Naive thymus-derived CD4-positive, alpha-beta T cell (primary cell): ENCODE measurements at regions of chr19 and their contacts with region 1.

Region 1: GRCh38 chr19:6297202-6297601 is 17.4 kb upstream of the MLLT1 start:
- DNase-seq: no peak
- ATAC-seq: no peak
- H3K4me3 ChIP-seq: no peak overlapping the region
- H3K4me3 Mint-ChIP-seq: no peak overlapping the region
- H3K27ac ChIP-seq: no peak overlapping the region
- H3K27ac Mint-ChIP-seq: no peak overlapping the region
- H3K4me1 ChIP-seq: no peaks in the 10 kb centered on the region
- H3K4me1 Mint-ChIP-seq: peaks cover 0 to 4% (median 0%) of the 10 kb centered on the region in 7 donors
- H3K27me3 ChIP-seq: no peaks in the 10 kb centered on the region
- H3K27me3 Mint-ChIP-seq: peaks cover 0 to 3% (median 0%) of the 10 kb centered on the region in 5 donors

Region 2: DNA sequence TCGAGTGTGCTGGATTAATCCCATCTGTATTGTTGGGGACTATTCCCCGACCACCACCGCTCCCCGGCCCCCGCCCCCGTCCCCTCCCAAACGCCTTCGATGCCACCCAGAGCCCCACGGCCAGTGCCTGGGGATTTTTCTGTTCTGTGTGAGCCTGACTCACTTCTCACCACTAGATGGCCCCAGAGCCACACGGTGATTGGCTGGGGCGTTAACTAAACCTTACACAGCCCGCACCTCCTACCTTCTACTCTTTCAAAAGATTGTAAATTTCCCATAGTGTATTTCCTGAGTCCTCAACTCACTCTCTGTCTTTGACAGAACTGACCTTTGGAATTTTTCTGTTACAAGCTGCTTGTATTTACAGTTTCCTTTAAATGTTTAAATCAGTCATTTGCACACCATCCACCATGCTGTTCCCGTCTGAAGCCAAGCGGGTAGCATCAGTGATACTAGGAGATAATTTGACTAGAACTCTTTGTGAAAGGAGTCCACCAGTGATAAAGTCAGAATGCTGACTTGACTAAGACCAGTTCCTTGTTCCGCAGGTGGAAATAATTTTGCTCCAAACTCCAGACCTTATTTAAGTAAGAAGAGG is 248.3 kb before region 1 on chr19:
- CTCF ChIA-PET with region 1: no interaction called
- POLR2A ChIA-PET with region 1: no interaction called
- intact Hi-C with region 1: loop called in 1 of 2 experiments (anchors 1 kb)
- DNase-seq: peak; percentile 56 to 81 (median 74)
- ATAC-seq: peak; percentile 100
- H3K4me3 ChIP-seq: no peak overlapping the region
- H3K4me3 Mint-ChIP-seq: no peak overlapping the region
- H3K27ac ChIP-seq: no peak overlapping the region
- H3K27ac Mint-ChIP-seq: no peak overlapping the region
- H3K4me1 ChIP-seq: no peaks in the 10 kb centered on the region
- H3K4me1 Mint-ChIP-seq: peaks cover 0 to 5% (median 4%) of the 10 kb centered on the region in 7 donors
- H3K27me3 ChIP-seq: no peaks in the 10 kb centered on the region
- H3K27me3 Mint-ChIP-seq: peaks cover 0 to 11% (median 0%) of the 10 kb centered on the region in 5 donors

Region 3: GRCh38 chr19:6076675-6077463 is 220.3 kb before region 1 on chr19:
- CTCF ChIA-PET with region 1: no interaction called
- POLR2A ChIA-PET with region 1: no interaction called
- intact Hi-C with region 1: no loop called
- DNase-seq: no peak
- ATAC-seq: peak; percentile 58
- H3K4me3 ChIP-seq: no peak overlapping the region
- H3K4me3 Mint-ChIP-seq: no peak overlapping the region
- H3K27ac ChIP-seq: no peak overlapping the region
- H3K27ac Mint-ChIP-seq: no peak overlapping the region
- H3K4me1 ChIP-seq: no peaks in the 10 kb centered on the region
- H3K4me1 Mint-ChIP-seq: peaks cover 0 to 11% (median 0%) of the 10 kb centered on the region in 7 donors
- H3K27me3 ChIP-seq: no peaks in the 10 kb centered on the region
- H3K27me3 Mint-ChIP-seq: no peaks in the 10 kb centered on the region

Region 4: DNA sequence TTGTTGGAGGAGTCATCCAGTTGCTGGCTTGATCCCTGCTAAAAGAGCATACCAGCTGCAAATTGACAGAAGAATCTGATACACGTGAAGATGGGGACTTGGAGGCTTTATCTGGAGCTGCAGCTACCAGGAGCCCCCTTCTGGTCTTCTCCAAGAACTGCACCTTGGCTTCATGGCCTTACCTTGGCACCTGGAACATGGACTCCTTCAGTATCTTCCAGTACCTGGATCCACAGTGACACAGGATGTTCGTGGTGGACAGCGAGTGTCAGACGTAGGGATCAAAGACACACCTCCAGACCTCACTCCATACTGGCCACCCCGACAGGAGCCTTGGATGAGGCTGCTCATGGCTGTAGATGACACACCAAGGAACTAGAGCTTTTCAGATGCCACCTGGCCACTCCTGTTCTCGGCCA is 171.6 kb before region 1 on chr19:
- CTCF ChIA-PET with region 1: no interaction called
- POLR2A ChIA-PET with region 1: no interaction called
- intact Hi-C with region 1: loop called (anchors 1 kb)
- DNase-seq: peak; percentile 25 to 78 (median 70)
- ATAC-seq: peak; percentile 89
- H3K4me3 ChIP-seq: no peak overlapping the region
- H3K4me3 Mint-ChIP-seq: no peak overlapping the region
- H3K27ac ChIP-seq: no peak overlapping the region
- H3K27ac Mint-ChIP-seq: peak overlapping the region in 1 of 9 donors; percentile 28
- H3K4me1 ChIP-seq: no peaks in the 10 kb centered on the region
- H3K4me1 Mint-ChIP-seq: peaks cover 0 to 7% (median 0%) of the 10 kb centered on the region in 7 donors
- H3K27me3 ChIP-seq: no peaks in the 10 kb centered on the region
- H3K27me3 Mint-ChIP-seq: no peaks in the 10 kb centered on the region

Region 5: GRCh38 chr19:6161271-6161850 is 135.8 kb before region 1 on chr19:
- CTCF ChIA-PET with region 1: no interaction called
- POLR2A ChIA-PET with region 1: no interaction called
- intact Hi-C with region 1: loop called in 1 of 2 experiments (anchors 1 kb)
- DNase-seq: peak; percentile 10 to 94 (median 78)
- ATAC-seq: peak; percentile 89
- H3K4me3 ChIP-seq: peak overlapping the region; percentile 13
- H3K4me3 Mint-ChIP-seq: peak overlapping the region in 9 of 10 donors; percentile 19 to 75 (median 38)
- H3K27ac ChIP-seq: no peak overlapping the region
- H3K27ac Mint-ChIP-seq: peak overlapping the region in 8 of 9 donors; percentile 33 to 88 (median 74)
- H3K4me1 ChIP-seq: peaks cover 4 to 8% of the 10 kb centered on the region in 2 donors
- H3K4me1 Mint-ChIP-seq: peaks cover 0 to 26% (median 11%) of the 10 kb centered on the region in 7 donors
- H3K27me3 ChIP-seq: no peaks in the 10 kb centered on the region
- H3K27me3 Mint-ChIP-seq: peaks cover 0 to 2% (median 0%) of the 10 kb centered on the region in 5 donors

Region 6: DNA sequence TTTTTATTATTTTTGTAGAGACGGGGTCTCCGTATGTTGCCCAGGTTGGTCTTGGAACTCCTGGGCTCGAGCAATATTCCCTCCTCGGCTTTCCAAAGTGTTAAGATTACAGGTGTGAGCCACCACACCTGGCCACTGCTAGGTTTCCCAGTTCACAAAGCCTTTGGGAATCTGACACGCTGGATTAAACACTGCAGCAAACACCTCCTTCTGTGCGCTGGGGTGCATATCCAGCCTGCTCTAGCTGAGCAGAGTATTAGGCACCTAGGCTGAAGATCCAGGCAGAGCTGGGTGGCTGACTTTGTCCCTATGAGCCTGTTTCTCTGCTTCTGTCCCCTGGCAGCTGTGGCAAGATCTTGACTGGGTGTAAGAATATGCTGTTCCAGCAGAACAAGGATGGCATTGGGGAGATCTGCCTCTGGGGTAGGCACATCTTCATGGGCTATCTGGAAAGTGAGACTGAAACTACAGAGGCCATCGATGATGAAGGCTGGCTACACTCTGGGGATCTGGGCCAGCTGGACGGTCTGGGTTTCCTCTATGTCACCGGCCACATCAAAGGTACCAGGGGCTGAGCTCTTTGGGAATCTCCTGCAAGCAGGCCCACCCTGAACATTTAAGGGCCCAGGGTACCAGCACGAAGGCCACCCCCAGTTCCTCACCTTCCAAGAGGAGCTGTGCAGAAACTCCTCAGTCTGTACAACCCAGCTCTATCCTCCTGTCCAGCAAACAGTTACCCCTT is 111.9 kb before region 1 on chr19:
- CTCF ChIA-PET with region 1: no interaction called
- POLR2A ChIA-PET with region 1: no interaction called
- intact Hi-C with region 1: no loop called
- DNase-seq: no peak
- ATAC-seq: no peak
- H3K4me3 ChIP-seq: no peak overlapping the region
- H3K4me3 Mint-ChIP-seq: no peak overlapping the region
- H3K27ac ChIP-seq: no peak overlapping the region
- H3K27ac Mint-ChIP-seq: no peak overlapping the region
- H3K4me1 ChIP-seq: no peaks in the 10 kb centered on the region
- H3K4me1 Mint-ChIP-seq: peaks cover 0 to 13% (median 6%) of the 10 kb centered on the region in 7 donors
- H3K27me3 ChIP-seq: peaks cover 0 to 3% of the 10 kb centered on the region in 2 donors
- H3K27me3 Mint-ChIP-seq: peaks cover 13 to 36% (median 32%) of the 10 kb centered on the region in 5 donors

Region 7: DNA sequence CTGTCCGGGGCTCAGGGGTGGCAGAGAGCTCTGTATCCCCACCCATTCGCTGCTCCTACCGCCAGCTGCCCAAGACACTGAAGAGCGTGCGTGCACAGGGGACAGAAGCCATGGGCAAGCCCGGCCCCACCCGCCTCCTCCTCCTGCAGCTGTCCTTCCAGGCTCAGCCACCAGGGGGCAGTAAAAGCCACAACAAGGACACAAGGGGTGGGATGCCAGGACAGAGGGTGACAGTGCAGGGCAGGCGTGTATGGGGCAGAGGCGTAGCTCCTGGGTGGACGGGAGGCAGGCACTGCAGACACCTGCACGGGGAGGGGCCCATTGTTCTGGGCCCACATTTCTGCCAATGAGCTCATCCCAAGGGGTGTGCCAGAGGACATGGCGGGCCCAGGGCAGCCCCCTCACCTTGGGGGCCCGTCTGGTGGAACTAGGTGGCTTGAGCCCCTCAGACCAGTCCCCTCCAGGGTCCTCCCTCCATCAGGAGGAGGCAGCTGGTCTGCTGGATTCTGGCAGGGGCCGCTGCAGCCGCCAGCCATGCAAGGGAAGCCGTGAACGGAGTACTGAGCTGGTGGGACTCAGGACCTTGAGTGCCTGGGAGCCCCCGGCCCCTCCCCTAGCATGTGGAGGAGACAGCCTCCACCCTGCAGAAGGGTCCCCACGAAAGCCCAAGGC is 78.6 kb before region 1 on chr19:
- CTCF ChIA-PET with region 1: interaction called, 9 read pairs
- POLR2A ChIA-PET with region 1: no interaction called
- intact Hi-C with region 1: loop called (anchors 1 kb)
- DNase-seq: peak; percentile 63 to 85 (median 76)
- ATAC-seq: peak; percentile 86
- H3K4me3 ChIP-seq: no peak overlapping the region
- H3K4me3 Mint-ChIP-seq: no peak overlapping the region
- H3K27ac ChIP-seq: no peak overlapping the region
- H3K27ac Mint-ChIP-seq: peak overlapping the region in 3 of 9 donors; percentile 10 to 78 (median 35)
- H3K4me1 ChIP-seq: no peaks in the 10 kb centered on the region
- H3K4me1 Mint-ChIP-seq: peaks cover 0 to 4% (median 0%) of the 10 kb centered on the region in 7 donors
- H3K27me3 ChIP-seq: no peaks in the 10 kb centered on the region
- H3K27me3 Mint-ChIP-seq: no peaks in the 10 kb centered on the region

Region 8: DNA sequence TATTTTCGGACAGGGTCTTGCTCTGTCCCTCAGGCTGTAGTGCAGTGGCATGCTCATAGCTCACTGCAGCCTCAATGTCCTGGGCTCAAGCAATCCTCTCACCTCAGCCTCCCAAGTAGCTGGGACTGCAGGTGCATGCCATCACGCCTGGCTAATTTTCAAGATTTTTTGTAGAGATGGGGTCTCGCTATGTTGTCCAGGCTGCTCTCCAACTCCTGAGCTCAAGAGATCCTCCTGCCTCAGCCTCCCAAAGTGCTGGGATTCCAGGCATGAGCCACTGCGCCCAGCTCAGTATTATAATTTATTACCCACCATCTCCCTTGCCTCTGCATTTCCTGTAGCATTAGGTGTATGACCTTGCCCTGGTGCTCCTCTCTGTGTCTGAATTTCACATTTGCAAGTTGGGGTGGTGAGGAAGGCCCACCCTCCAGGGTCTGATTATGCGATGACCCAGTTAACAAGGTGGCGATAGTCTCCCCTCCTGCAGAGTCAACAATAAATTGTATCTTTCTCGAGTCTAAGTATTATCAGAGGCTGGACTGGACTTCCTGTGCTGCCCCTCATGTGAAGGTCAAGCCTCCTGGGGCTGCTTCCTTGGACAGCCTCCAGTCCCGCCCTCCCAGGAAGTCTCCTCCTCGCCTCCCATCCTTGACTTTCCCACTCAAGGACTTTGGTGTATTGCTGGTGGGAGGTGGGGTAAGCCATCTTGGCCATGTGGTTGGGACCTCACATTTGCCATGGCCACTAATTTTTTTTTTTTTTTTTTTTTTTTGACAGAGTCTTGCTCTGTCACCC is 206.4 kb after region 1 on chr19:
- CTCF ChIA-PET with region 1: no interaction called
- POLR2A ChIA-PET with region 1: no interaction called
- intact Hi-C with region 1: loop called in 1 of 2 experiments (anchors 2 kb)
- DNase-seq: no peak
- ATAC-seq: no peak
- H3K4me3 ChIP-seq: no peak overlapping the region
- H3K4me3 Mint-ChIP-seq: peak overlapping the region in 9 of 10 donors; percentile 7 to 93 (median 66)
- H3K27ac ChIP-seq: no peak overlapping the region
- H3K27ac Mint-ChIP-seq: peak overlapping the region in 2 of 9 donors; percentile 27 to 71
- H3K4me1 ChIP-seq: peaks cover 7 to 8% of the 10 kb centered on the region in 2 donors
- H3K4me1 Mint-ChIP-seq: peaks cover 6 to 22% (median 19%) of the 10 kb centered on the region in 7 donors
- H3K27me3 ChIP-seq: no peaks in the 10 kb centered on the region
- H3K27me3 Mint-ChIP-seq: peaks cover 0 to 26% (median 0%) of the 10 kb centered on the region in 5 donors